SK-N-SH (cell line): ENCODE measurements at regions of chr12 and their contacts with region 1.

Region 1: DNA sequence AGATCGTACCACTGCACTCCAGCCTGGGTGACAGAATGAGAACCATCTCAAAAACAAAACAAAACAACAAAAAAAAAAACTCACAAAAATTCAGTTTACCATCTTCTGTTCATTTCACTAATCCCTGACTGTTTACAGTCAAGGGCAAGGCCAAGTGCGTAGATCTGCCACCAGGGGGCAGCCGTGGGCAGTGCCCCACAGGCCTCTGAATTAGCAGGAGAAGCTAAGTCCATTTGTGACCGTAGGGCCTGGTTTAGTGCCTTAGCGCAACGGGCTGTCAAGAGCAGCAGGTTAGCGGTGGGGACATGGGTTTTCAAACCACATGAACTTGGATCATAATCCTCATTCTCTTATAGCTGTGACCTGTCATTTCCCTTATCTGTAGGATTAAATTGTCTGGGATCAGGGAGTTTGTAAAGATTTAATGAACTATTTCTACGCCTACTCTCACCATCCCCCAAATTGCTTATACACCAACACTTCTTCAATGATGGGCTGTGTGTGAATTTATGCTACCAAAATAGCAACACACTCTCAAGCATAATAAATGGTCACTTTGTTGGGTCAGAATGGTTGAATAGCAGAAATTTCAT is 49.0 kb downstream of the KCTD10 start:
- DNase-seq: peak; percentile 78
- H3K4me3 ChIP-seq: peak overlapping the region in 1 of 2 experiments; percentile 28; a peak in 1 of 4 replicates
- H3K27ac ChIP-seq: no peak overlapping the region
- H3K4me1 ChIP-seq: no peaks in the 10 kb centered on the region
- H3K27me3 ChIP-seq: no peaks in the 10 kb centered on the region
- CTCF ChIP-seq: peak; percentile 98
- EP300 ChIP-seq: no peak
- RAD21 ChIP-seq: peak; percentile 80

Region 2: GRCh38 chr12:109346920-109347319 is 81.2 kb before region 1 on chr12:
- CTCF ChIA-PET with region 1: no interaction called
- POLR2A ChIA-PET with region 1: no interaction called
- DNase-seq: no peak
- H3K4me3 ChIP-seq: no peak overlapping the region
- H3K27ac ChIP-seq: no peak overlapping the region
- H3K4me1 ChIP-seq: no peaks in the 10 kb centered on the region
- H3K27me3 ChIP-seq: no peaks in the 10 kb centered on the region
- CTCF ChIP-seq: peak; percentile 30; the same call in 1 of the 2 replicates
- EP300 ChIP-seq: no peak
- RAD21 ChIP-seq: no peak

Region 3: DNA sequence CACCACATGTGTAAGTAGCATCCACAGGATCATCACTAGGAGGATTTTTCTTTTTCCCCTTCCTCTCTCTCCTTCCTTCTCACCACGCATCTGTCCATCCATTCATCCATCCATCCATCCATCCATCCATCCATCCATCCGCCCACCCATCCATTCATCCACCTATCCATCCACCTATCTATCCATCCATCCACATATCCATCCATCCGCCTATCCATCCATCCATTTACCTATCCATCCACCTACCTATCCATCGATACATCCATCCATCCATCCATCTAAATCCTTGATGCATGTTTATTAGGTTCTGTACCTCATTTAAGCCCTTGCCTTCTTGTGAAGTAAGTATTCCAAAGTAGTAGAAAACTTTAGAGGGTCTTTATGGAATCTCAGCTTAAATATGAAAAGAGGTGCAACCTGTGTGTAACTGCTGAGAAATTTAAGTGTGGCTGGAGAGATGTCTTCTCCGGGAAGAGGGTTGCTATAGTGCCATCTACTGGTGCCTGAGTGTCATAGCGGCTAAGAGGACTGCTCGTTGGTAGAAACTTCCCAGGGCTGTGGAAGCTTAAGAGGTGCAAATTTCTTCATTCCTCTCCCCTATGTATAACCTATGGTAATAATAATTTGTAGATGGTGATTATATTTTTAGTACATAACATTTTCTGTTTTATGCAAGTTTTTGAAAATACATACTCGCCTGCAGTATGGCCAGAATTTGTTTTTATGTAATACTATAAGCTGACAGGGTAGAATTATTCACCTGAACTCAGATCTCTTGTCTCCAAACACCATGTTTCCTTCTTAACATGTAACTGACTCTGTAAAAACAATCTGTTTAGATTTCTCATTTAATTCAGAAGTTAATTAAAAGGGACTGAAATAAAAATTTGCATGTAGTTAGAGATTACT is 34.4 kb before region 1 on chr12:
- CTCF ChIA-PET with region 1: interaction called, 16 read pairs
- POLR2A ChIA-PET with region 1: no interaction called
- DNase-seq: peak; percentile 74
- H3K4me3 ChIP-seq: no peak overlapping the region; a peak in 1 of 4 replicates
- H3K27ac ChIP-seq: no peak overlapping the region
- H3K4me1 ChIP-seq: no peaks in the 10 kb centered on the region
- H3K27me3 ChIP-seq: no peaks in the 10 kb centered on the region
- CTCF ChIP-seq: peak; percentile 94
- EP300 ChIP-seq: no peak
- RAD21 ChIP-seq: peak; percentile 68

Region 4: DNA sequence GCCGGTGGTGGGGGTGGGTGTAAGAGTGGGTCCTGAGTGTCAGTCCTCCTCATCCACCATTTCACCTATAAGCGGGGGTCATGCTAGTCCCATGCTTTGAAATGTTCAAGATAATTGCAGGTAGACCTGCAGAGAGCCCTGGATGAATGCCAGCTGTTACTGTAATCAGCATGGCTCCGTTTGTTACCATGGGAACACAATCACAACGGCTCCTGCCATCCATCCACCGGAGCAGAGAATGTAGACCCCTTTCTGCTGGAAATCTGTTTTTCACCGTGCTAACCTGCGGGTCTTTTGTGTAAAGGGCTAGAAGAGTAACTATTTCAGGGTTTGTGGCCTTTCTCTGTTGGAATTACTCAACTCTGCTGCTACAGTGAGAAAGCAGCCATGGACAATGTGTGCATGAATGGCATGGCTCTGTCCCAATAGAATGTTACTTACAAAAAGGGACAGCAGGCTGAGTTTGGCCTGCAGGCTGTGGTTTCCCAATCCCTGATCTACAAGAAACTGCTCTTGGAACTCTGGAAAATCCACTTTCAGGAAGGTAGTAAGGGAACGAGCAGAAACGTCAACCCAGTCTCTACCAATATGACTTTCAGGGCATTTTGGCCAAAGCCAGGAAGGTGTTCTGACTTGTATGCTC is 12.8 kb after region 1 on chr12:
- CTCF ChIA-PET with region 1: interaction called, 19 read pairs
- POLR2A ChIA-PET with region 1: no interaction called
- DNase-seq: peak; percentile 57
- H3K4me3 ChIP-seq: no peak overlapping the region
- H3K27ac ChIP-seq: no peak overlapping the region
- H3K4me1 ChIP-seq: peaks cover 0 to 5% of the 10 kb centered on the region in 2 experiments; a peak in 1 of 4 replicates
- H3K27me3 ChIP-seq: no peaks in the 10 kb centered on the region
- CTCF ChIP-seq: no peak
- EP300 ChIP-seq: no peak
- RAD21 ChIP-seq: no peak

Region 5: GRCh38 chr12:109449845-109450532 is 21.9 kb after region 1 on chr12:
- CTCF ChIA-PET with region 1: interaction called, 20 read pairs
- POLR2A ChIA-PET with region 1: no interaction called
- DNase-seq: peak; percentile 60
- H3K4me3 ChIP-seq: no peak overlapping the region
- H3K27ac ChIP-seq: no peak overlapping the region; a peak in 1 of 4 replicates
- H3K4me1 ChIP-seq: no peaks in the 10 kb centered on the region
- H3K27me3 ChIP-seq: no peaks in the 10 kb centered on the region
- CTCF ChIP-seq: peak; percentile 20; the same call in 1 of the 2 replicates
- EP300 ChIP-seq: no peak
- RAD21 ChIP-seq: peak; percentile 24; the same call in 1 of the 2 replicates

Region 6: DNA sequence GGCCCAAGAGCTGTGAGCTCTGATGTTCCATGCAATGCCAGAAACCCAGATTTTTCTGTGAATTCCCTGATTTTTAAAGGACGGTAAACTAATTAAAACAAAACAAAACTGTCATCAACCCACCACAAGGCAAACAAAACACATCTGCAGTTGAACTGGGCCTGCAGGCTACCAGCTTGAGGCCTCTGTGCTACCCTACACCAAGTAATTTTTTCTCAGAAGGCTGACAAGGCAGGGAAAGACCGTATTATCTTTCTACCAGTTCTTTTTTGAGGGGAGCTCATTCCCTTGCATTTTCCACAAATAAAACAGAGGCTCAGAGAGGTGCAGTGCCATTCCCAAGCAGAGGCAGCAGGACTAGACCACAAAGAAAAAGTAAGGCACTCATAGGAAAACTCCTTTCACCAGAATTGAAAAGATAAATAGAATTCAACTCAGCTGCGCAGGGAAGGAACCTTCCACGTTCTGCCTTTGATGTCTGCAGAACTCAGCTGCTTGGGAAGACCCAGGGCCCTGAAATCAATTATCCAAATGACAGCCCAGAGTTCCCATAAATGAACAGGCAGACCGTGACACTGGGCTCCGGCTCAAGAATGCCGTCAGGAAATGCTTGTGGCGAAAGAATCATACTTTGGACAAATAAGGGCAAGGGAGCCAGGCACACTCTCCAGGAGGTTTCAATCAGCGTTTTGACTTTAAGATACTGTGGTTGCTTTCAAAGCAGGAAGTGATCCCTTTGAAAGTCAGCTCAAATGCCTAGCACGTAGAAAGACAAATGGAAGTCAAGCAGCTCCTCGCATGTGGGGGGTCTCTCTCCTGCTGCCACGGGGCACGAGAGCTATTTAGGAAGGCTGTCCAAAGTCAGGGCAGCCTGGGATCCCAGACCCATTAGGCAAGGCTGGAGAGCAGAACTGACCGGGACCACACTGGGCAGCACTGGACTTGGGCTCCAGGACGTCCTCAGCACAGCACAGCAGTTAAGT is 34.9 kb after region 1 on chr12:
- CTCF ChIA-PET with region 1: interaction called, 21 read pairs
- POLR2A ChIA-PET with region 1: no interaction called
- DNase-seq: peak; percentile 51
- H3K4me3 ChIP-seq: peak overlapping the region; percentile 23 to 40; a peak in 3 of 4 replicates
- H3K27ac ChIP-seq: peak overlapping the region; percentile 97 to 99
- H3K4me1 ChIP-seq: peaks cover 56 to 63% of the 10 kb centered on the region in 2 experiments
- H3K27me3 ChIP-seq: no peaks in the 10 kb centered on the region
- CTCF ChIP-seq: no peak
- EP300 ChIP-seq: peak; percentile 66 to 93
- RAD21 ChIP-seq: no peak

Region 7: DNA sequence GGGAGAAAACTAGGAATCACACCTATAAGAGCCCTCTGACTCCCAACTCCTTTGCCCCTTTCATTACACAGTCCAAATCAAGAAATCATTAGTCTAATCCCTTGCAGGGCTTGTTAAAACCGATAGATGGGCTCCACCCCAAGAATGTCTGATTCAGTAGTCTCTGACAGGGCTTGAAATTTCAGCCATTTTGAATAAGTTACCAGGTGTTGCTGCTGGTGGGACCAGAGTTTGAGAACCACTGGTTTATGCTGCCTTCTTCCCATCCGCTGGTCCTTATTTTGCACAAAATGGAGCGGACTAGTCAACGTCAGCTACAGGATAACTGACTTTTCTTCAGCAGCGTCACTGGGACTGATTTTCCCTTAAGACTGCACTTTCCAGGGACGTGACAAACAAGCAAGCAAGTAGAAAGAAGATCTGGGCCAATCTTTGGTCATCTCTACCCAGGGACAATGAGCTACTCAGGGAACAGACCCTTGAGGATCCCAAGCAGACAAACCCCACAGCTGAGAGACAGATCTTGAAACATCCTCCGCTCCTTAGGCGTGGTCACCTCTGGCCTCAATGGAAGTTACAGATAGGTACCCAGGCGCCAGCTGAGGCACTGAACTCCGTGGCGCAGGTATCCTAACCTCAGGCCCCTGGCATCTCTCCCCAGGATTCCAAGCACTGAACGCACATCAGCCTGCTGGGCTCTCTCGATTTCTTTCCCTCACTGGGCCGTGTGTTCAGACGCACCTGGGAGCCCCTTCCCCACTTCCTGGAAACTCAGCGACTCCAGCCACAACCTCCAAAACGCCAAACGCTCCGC is 48.1 kb after region 1 on chr12:
- CTCF ChIA-PET with region 1: interaction called, 13 read pairs
- POLR2A ChIA-PET with region 1: no interaction called
- DNase-seq: peak; percentile 27
- H3K4me3 ChIP-seq: peak overlapping the region; percentile 93 to 94
- H3K27ac ChIP-seq: peak overlapping the region in 1 of 2 experiments; percentile 87; a peak in 2 of 4 replicates
- H3K4me1 ChIP-seq: peaks cover 16 to 17% of the 10 kb centered on the region in 2 experiments; a peak in 3 of 4 replicates
- H3K27me3 ChIP-seq: no peaks in the 10 kb centered on the region
- CTCF ChIP-seq: no peak
- EP300 ChIP-seq: no peak
- RAD21 ChIP-seq: no peak

Region 8: DNA sequence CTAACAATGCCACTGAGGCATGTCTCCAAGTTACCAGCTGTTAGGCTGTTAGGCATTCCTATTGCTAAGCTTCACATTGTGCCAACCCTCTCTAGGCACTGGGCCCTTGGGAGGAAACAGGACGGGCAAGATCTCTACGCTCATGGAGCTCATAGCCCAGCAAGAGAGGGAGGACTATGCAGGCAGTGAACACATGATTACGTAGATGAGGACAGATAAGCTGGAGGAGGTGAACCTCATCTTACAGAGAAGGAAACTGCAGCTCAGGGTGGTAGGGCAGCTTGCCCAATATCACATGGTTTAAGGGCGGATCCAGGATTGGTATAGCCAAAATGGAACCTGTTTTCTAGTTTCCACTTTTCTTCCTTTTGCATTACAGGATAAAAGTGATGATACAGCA is 57.1 kb after region 1 on chr12:
- CTCF ChIA-PET with region 1: interaction called, 11 read pairs
- POLR2A ChIA-PET with region 1: no interaction called
- DNase-seq: no peak
- H3K4me3 ChIP-seq: no peak overlapping the region
- H3K27ac ChIP-seq: no peak overlapping the region
- H3K4me1 ChIP-seq: no peaks in the 10 kb centered on the region
- H3K27me3 ChIP-seq: no peaks in the 10 kb centered on the region
- CTCF ChIP-seq: no peak
- EP300 ChIP-seq: no peak
- RAD21 ChIP-seq: no peak

Region 9: GRCh38 chr12:109727039-109727723 is 299.0 kb after region 1 on chr12:
- CTCF ChIA-PET with region 1: no interaction called
- POLR2A ChIA-PET with region 1: no interaction called
- DNase-seq: peak; percentile 36
- H3K4me3 ChIP-seq: no peak overlapping the region
- H3K27ac ChIP-seq: peak overlapping the region in 1 of 2 experiments; percentile 58; a peak in 2 of 4 replicates
- H3K4me1 ChIP-seq: peaks cover 0 to 98% of the 10 kb centered on the region in 2 experiments; a peak in 2 of 4 replicates
- H3K27me3 ChIP-seq: no peaks in the 10 kb centered on the region
- CTCF ChIP-seq: no peak
- EP300 ChIP-seq: no peak
- RAD21 ChIP-seq: no peak